HEK293 (cell line): ENCODE measurements at regions of chr19 and their contacts with region 1.

Region 1: GRCh38 chr19:54137086-54137921 is at the start of gene CNOT3:
- H3K4me3 ChIP-seq: peak within 1 kb of the TSS; percentile 94
- H3K27ac ChIP-seq: peak within 1 kb of the TSS; percentile 88
- H3K4me1 ChIP-seq: peaks cover 13% of the 10 kb centered on the region
- CTCF ChIP-seq: no peak

Region 2: DNA sequence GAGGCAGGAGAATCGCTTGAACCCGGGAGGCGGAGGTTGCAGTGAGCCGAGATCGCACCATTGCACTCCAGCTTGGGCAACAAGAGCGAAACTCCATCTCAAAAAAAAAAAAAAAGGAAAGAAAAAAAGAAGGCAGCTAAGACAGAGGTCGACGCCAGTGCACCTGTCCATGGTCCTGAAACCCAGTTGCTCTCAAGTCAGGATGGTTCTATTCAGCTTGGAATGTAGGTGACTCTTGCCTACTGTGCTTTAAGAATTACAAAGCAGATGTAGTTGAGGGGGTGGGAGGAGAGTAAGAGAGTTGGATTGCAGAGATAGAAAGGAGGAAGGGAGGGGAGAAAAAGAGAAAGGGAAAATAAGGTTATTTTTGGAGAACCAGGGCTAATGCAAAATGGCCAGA is 209.6 kb before region 1 on chr19:
- CTCF ChIA-PET with region 1: no interaction called
- POLR2A ChIA-PET with region 1: no interaction called
- H3K4me3 ChIP-seq: no peak overlapping the region
- H3K27ac ChIP-seq: no peak overlapping the region
- H3K4me1 ChIP-seq: no peaks in the 10 kb centered on the region
- CTCF ChIP-seq: no peak

Region 3: DNA sequence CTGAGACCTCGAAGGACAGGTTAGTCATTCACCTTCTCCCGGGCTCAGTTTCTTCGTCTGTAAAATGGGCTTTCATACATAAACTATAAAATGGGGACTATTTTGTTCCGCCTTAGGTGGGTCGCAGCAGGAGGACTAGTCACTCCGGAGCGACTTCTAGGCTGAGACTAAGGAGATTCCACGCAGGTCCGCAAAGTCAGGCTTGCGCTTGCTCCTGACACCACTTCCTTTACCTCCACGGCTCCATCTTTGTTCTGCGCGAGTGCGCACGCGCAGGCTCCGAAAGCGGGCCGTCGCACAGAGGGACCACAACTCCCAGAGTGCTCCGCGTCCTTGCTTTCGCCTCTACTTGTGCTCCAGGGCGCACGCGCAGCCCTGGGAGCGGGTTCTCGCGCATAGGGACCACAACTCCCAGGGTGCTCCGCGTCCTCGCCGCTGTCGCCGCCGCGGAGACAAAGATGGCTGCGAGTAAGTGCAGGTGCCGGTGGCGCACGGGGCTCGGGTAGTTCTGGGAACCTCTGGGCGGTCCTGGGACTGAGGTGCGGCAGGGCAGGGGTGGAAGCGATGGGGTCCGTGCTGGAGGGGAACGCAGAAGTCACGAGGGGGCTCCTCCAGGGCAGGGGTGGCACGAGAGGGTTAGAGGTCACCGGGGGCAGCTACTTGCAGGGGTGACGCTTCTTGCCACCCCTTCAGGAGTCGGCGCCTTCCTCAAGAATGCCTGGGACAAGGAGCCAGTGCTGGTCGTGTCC is 34.7 kb before region 1 on chr19 and contains the start of gene NDUFA3:
- CTCF ChIA-PET with region 1: no interaction called
- POLR2A ChIA-PET with region 1: interaction called, 12 read pairs
- H3K4me3 ChIP-seq: peak within 1 kb of the TSS; percentile 97
- H3K27ac ChIP-seq: peak within 1 kb of the TSS; percentile 63; the same call in 1 of the 2 replicates
- H3K4me1 ChIP-seq: peaks cover 2% of the 10 kb centered on the region; the same call in 1 of the 2 replicates
- CTCF ChIP-seq: 0 out of 2 replicates have a peak, but pooled peaks have one; percentile 18

Region 4: GRCh38 chr19:54115109-54116063 is 21.9 kb before region 1 on chr19 and contains the starts of genes PRPF31 and TFPT:
- CTCF ChIA-PET with region 1: interaction called, 5 read pairs
- POLR2A ChIA-PET with region 1: interaction called, 116 read pairs
- H3K4me3 ChIP-seq: peak within 1 kb of the TSS; percentile 95
- H3K27ac ChIP-seq: peak within 1 kb of the TSS; percentile 80
- H3K4me1 ChIP-seq: peaks cover 7% of the 10 kb centered on the region
- CTCF ChIP-seq: 0 out of 2 replicates have a peak, but pooled peaks have one; percentile 42

Region 5: GRCh38 chr19:54159352-54160181 is 22.3 kb after region 1 on chr19 and contains the start of gene LENG1:
- CTCF ChIA-PET with region 1: interaction called, 4 read pairs
- POLR2A ChIA-PET with region 1: interaction called, 87 read pairs
- H3K4me3 ChIP-seq: peak within 1 kb of the TSS; percentile 96
- H3K27ac ChIP-seq: peak within 1 kb of the TSS; percentile 78
- H3K4me1 ChIP-seq: peaks cover 4% of the 10 kb centered on the region; the same call in 1 of the 2 replicates
- CTCF ChIP-seq: peak; percentile 90

Region 6: GRCh38 chr19:54168174-54168917 is 31.0 kb after region 1 on chr19:
- CTCF ChIA-PET with region 1: interaction called, 5 read pairs
- POLR2A ChIA-PET with region 1: interaction called, 17 read pairs
- H3K4me3 ChIP-seq: no peak overlapping the region
- H3K27ac ChIP-seq: no peak overlapping the region
- H3K4me1 ChIP-seq: no peaks in the 10 kb centered on the region
- CTCF ChIP-seq: peak; percentile 83

Region 7: GRCh38 chr19:54203151-54203611 is 65.9 kb after region 1 on chr19:
- CTCF ChIA-PET with region 1: no interaction called
- POLR2A ChIA-PET with region 1: interaction called, 17 read pairs
- H3K4me3 ChIP-seq: no peak overlapping the region
- H3K27ac ChIP-seq: no peak overlapping the region
- H3K4me1 ChIP-seq: peaks cover 10% of the 10 kb centered on the region
- CTCF ChIP-seq: no peak

Region 8: DNA sequence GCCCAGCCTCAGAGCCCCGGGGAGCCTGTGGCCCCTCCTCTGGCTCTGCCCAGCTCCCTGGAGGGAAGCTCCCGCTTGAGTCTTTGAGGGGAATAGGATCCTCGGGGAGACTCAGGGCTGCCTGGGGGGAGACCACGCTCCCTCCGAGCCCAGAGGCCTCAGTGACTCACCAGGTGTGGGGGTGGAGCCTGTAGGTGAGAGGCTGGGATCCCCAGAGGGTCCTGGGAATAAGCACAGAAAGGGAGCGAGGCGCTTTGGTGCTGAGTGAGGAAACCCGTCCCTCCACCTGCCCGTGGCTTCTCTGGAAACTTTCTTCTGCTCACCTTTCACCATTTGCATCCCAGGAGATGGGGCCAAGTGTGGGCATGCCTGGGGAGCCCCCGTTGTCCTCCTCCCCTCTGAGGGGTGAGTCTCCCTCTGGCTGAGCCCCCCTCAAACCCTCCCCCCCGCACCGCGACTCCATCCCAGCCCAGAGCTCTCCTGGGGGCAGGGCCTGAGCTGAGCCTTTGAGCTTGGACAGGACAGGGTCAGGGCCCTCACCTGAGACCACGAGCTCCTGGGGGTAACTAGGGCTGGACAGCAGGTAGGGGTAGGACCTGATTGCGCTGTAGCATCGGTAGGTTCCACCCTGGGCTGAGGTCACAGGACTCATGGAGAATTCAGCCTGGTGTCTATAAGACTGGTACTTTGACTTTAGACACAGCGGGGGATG is 117.0 kb after region 1 on chr19:
- CTCF ChIA-PET with region 1: no interaction called
- POLR2A ChIA-PET with region 1: no interaction called
- H3K4me3 ChIP-seq: no peak overlapping the region
- H3K27ac ChIP-seq: no peak overlapping the region
- H3K4me1 ChIP-seq: no peaks in the 10 kb centered on the region
- CTCF ChIP-seq: no peak